Thyroid gland (tissue), 4 donors: ENCODE measurements at regions of chr4 and their contacts with region 1.

Region 1: DNA sequence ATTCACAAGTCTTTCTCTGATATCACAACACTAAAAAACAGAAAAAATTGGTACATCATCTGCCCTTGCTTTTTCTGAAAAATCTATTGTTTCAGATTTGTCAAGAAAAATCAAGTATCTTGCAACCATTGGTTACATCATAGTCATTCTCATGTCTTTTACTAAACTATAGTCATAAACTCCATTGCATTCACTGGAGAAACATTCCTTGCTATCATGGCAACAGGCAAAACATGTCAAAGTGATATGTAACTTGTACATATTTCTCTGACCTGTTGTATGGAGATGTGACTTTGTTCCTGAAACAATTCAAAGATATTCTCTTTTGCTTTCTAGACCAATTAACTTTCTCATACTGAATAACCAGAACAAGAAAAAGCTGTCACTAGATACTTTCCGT is 121.9 kb upstream of the ANK2 start:
- DNase-seq: no peak
- H3K4me3 ChIP-seq: no peak overlapping the region
- H3K27ac ChIP-seq: no peak overlapping the region
- H3K4me1 ChIP-seq: no peaks in the 10 kb centered on the region
- H3K27me3 ChIP-seq: no peaks in the 10 kb centered on the region
- CTCF ChIP-seq: no peak
- POLR2A ChIP-seq: no peak

Region 2: DNA sequence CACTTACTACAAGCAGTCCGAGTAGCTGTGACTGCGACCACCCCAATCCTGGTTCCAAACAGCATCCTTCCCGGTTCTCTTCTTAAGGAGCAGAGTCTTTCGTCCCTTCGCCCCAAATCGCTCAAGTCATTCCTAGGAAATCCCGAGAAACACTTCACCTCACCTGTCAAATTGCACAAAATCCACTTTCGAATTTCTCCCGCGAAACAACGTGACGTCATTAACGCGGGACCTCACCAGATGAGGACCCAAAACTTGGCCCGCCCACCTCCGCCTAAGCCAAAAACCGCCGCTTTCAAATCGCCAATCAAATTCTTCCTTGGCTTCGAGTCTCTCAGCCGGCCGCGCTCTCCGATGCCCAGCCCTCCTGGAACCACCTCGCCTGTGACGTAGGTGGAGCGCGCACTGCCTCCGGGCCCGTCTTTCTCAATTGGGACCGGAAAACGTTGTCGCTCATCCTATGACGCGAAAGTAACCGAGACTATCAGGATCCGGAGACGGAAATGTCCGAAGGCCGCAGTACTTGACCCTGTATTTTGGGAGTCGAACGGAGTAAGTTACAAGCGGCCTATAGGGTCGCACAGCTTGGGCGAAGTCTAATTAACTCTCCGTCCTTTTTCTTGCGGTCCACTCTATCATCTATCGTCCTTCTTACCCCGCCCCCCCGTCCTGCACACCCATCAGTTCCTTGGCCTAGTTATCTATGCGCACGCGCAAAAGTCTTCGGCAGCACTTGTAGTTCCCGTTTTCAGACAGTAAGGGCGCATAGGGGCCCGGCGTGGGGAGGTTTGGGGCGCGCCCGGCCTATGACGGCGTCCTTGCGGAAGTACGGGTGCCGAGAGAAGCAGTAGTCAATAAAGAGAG is 290.6 kb before region 1 on chr4 and contains the starts of genes LARP7 and ZGRF1:
- intact Hi-C with region 1: loop called (anchors 10 kb)
- DNase-seq: peak; percentile 99
- H3K4me3 ChIP-seq: peak within 1 kb of the TSS; percentile 12 to 41 (median 27)
- H3K27ac ChIP-seq: peak within 1 kb of the TSS; percentile 81 to 99 (median 90)
- H3K4me1 ChIP-seq: peaks cover 0 to 7% of the 10 kb centered on the region in 2 donors
- H3K27me3 ChIP-seq: no peaks in the 10 kb centered on the region
- CTCF ChIP-seq: peak; percentile 94 to 97 (median 96)
- POLR2A ChIP-seq: peak in 1 of 2 donors; percentile 49
- total RNA-seq, gene LARP7: 43.5 to 53.1 (median 51.5) TPM
- total RNA-seq, gene ZGRF1: 5.2 to 9.0 (median 6.5) TPM

Region 3: DNA sequence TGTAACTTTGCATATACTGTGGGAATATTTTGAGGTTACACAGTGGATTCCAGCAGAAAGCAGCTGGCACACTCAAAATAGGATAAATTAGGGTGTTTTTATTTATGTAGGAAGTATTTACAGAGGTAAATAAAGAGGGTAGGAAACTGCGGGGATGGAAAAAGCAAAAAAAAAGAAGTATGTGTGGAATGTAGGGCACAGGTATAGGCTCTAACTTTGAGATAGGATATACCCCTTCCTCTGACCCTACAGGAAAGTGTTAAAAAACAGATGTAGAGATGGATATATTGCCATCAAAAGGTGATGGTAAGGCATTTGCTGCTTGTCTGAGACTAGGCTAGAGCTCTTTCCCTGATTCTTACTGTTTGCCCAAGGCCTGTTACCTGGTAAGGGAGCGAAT is 51.2 kb before region 1 on chr4:
- intact Hi-C with region 1: no loop called
- DNase-seq: no peak
- H3K4me3 ChIP-seq: no peak overlapping the region
- H3K27ac ChIP-seq: no peak overlapping the region
- H3K4me1 ChIP-seq: no peaks in the 10 kb centered on the region
- H3K27me3 ChIP-seq: no peaks in the 10 kb centered on the region
- CTCF ChIP-seq: no peak
- POLR2A ChIP-seq: no peak